GM12878 (cell line): ENCODE measurements at regions of chr7 and their contacts with region 1.

Region 1: GRCh38 chr7:30212701-30213111 is 71.7 kb upstream of the ZNRF2 start:
- DNase-seq: no peak
- ATAC-seq: no peak
- H3K4me3 ChIP-seq: no peak overlapping the region
- H3K27ac ChIP-seq: no peak overlapping the region
- H3K4me1 ChIP-seq: peaks cover 12% of the 10 kb centered on the region; the same call in 1 of the 2 replicates
- H3K27me3 ChIP-seq: no peaks in the 10 kb centered on the region
- CTCF ChIP-seq: no peak
- EP300 ChIP-seq: no peak
- POLR2A ChIP-seq: no peak
- RAD21 ChIP-seq: no peak

Region 2: DNA sequence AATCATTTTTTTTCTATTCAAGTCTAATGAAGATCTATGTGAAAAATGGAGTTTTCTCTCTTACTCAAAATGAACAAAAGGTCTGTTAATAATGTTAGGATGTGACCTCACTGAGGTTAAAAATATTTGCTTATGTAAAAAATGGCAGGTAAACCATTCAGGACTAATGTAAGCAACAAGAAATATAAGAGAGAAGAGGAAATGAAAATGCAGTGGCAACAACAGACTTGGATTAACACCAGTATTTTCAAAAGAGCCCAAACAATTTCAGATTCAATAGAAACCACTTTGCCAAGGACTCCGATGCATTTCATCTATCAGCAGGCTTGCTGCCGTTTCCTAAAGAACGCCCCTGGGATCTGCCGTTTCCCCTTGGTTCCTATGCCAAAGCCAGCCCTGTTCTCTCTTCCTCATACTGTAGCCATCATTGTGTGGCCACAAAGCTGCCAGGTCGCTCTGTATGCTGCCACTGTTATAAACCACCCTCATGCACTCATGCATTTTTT is 11.5 kb before region 1 on chr7:
- CTCF ChIA-PET with region 1: interaction called, 3 read pairs
- POLR2A ChIA-PET with region 1: interaction called, 12 read pairs
- RAD21 ChIA-PET with region 1: interaction called, 3 read pairs
- SMC1A ChIA-PET with region 1: interaction called, 11 read pairs
- in situ Hi-C with region 1: no loop called
- intact Hi-C with region 1: no loop called
- DNase-seq: peak; percentile 51
- ATAC-seq: peak; percentile 92
- H3K4me3 ChIP-seq: 0 out of 2 replicates have a peak overlapping the region, but pooled peaks have one; percentile 14
- H3K27ac ChIP-seq: peak overlapping the region; percentile 17; the same call in 1 of the 2 replicates
- H3K4me1 ChIP-seq: peaks cover 19% of the 10 kb centered on the region
- H3K27me3 ChIP-seq: no peaks in the 10 kb centered on the region
- CTCF ChIP-seq: no peak
- EP300 ChIP-seq: peak; percentile 76 to 80; a peak in 2 of 4 replicates
- POLR2A ChIP-seq: no peak
- RAD21 ChIP-seq: no peak